ENCODE measurements at regions of chr6 and their contacts with region 1.

Region 1: GRCh38 chr6:90274451-90275030 is 22.1 kb downstream of the BACH2 start:
- DNase-seq: peak; percentile 80 to 98 (median 86)
- ATAC-seq: peak; percentile 86
- H3K4me3 ChIP-seq: peak overlapping the region in 1 of 2 experiments; percentile 10
- H3K4me3 Mint-ChIP-seq: peak overlapping the region; percentile 74
- H3K27ac ChIP-seq: peak overlapping the region; percentile 67 to 90
- H3K27ac Mint-ChIP-seq: peak overlapping the region; percentile 98
- H3K4me1 ChIP-seq: peaks cover 87% of the 10 kb centered on the region
- H3K4me1 Mint-ChIP-seq: peaks cover 90% of the 10 kb centered on the region
- H3K27me3 ChIP-seq: no peaks in the 10 kb centered on the region
- H3K27me3 Mint-ChIP-seq: no peaks in the 10 kb centered on the region
- CTCF ChIP-seq: peak; percentile 47

Region 2: DNA sequence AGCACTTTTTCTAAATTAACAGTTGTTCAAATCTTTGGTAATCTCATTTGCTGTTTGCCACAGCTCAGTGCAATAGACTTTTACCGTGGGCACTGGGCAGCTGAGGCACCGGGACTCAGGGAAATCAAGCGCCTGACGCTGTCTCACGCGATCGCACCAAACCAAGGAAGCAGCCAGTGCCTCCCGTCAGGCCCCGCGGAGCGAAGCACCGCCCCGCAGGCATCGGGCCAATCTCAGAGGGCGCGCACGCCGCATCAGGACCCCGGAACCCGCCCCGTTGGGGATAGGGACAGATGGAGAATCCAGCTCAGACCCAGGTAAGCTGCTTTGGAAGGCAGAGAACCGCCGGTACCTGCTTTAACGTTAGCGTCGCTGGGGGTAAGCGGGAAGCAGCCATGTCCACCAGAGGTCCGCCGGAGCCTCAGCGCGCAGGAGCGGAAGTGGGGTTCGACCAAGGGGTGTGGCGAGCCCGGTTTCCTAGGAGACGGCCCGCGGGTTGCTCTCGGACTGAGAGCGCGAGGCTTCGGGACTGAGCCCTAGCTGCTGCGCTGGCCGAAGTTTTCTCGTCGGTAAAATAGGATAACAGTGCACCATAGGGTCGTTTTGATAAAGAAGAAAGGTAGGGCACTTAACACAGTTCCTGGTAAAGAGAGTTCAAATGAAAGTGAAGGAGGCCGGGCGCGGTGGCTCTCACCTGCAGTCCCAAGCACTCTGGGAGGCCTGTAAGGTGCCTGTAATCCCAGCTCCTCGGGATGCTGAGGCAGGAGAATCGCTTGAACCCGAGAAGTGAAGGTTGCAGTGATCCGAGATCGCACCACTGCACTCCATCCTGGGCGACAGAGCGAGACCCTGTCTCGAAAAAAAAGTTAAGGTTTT is 636.0 kb before region 1 on chr6 and contains the start of gene LYRM2:
- CTCF ChIA-PET with region 1: no interaction called
- POLR2A ChIA-PET with region 1: no interaction called
- intact Hi-C with region 1: loop called in 1 of 2 experiments (anchors 5 kb)
- DNase-seq: peak; percentile 83 to 95 (median 89)
- ATAC-seq: peak; percentile 95
- H3K4me3 ChIP-seq: peak within 1 kb of the TSS; percentile 84 to 90
- H3K4me3 Mint-ChIP-seq: peak within 1 kb of the TSS; percentile 99
- H3K27ac ChIP-seq: peak within 1 kb of the TSS; percentile 91 to 98
- H3K27ac Mint-ChIP-seq: peak within 1 kb of the TSS; percentile 99
- H3K4me1 ChIP-seq: peaks cover 15% of the 10 kb centered on the region
- H3K4me1 Mint-ChIP-seq: peaks cover 34% of the 10 kb centered on the region
- H3K27me3 ChIP-seq: no peaks in the 10 kb centered on the region
- H3K27me3 Mint-ChIP-seq: no peaks in the 10 kb centered on the region
- CTCF ChIP-seq: no peak
- total RNA-seq, gene LYRM2: 16.7 to 17.8 TPM

Region 3: GRCh38 chr6:89662742-89663404 is 611.7 kb before region 1 on chr6:
- CTCF ChIA-PET with region 1: no interaction called
- POLR2A ChIA-PET with region 1: no interaction called
- intact Hi-C with region 1: no loop called
- DNase-seq: no peak
- ATAC-seq: no peak
- H3K4me3 ChIP-seq: no peak overlapping the region
- H3K4me3 Mint-ChIP-seq: no peak overlapping the region
- H3K27ac ChIP-seq: no peak overlapping the region
- H3K27ac Mint-ChIP-seq: peak overlapping the region; percentile 37
- H3K4me1 ChIP-seq: no peaks in the 10 kb centered on the region
- H3K4me1 Mint-ChIP-seq: no peaks in the 10 kb centered on the region
- H3K27me3 ChIP-seq: no peaks in the 10 kb centered on the region
- H3K27me3 Mint-ChIP-seq: no peaks in the 10 kb centered on the region
- CTCF ChIP-seq: no peak

Region 4: GRCh38 chr6:90080876-90081481 is 193.6 kb before region 1 on chr6:
- CTCF ChIA-PET with region 1: interaction called, 5 read pairs
- POLR2A ChIA-PET with region 1: no interaction called
- intact Hi-C with region 1: loop called (anchors 5 kb)
- DNase-seq: peak; percentile 40 to 89 (median 68)
- ATAC-seq: peak; percentile 80
- H3K4me3 ChIP-seq: peak overlapping the region; percentile 54 to 66
- H3K4me3 Mint-ChIP-seq: peak overlapping the region; percentile 98
- H3K27ac ChIP-seq: peak overlapping the region; percentile 66 to 77
- H3K27ac Mint-ChIP-seq: peak overlapping the region; percentile 99
- H3K4me1 ChIP-seq: peaks cover 75% of the 10 kb centered on the region
- H3K4me1 Mint-ChIP-seq: peaks cover 89% of the 10 kb centered on the region
- H3K27me3 ChIP-seq: no peaks in the 10 kb centered on the region
- H3K27me3 Mint-ChIP-seq: no peaks in the 10 kb centered on the region
- CTCF ChIP-seq: no peak

Region 5: GRCh38 chr6:90216072-90216977 is 58.2 kb before region 1 on chr6:
- CTCF ChIA-PET with region 1: interaction called, 4 read pairs
- POLR2A ChIA-PET with region 1: interaction called, 3 read pairs
- intact Hi-C with region 1: loop called (anchors 1 to 2 kb)
- DNase-seq: peak in 7 of 9 experiments; percentile 21 to 84 (median 62)
- ATAC-seq: peak; percentile 29
- H3K4me3 ChIP-seq: peak overlapping the region in 1 of 2 experiments; percentile 16
- H3K4me3 Mint-ChIP-seq: peak overlapping the region; percentile 21
- H3K27ac ChIP-seq: peak overlapping the region; percentile 39 to 71
- H3K27ac Mint-ChIP-seq: no peak overlapping the region
- H3K4me1 ChIP-seq: peaks cover 100% of the 10 kb centered on the region
- H3K4me1 Mint-ChIP-seq: peaks cover 31% of the 10 kb centered on the region
- H3K27me3 ChIP-seq: no peaks in the 10 kb centered on the region
- H3K27me3 Mint-ChIP-seq: no peaks in the 10 kb centered on the region
- CTCF ChIP-seq: no peak

Region 6: GRCh38 chr6:90256698-90257485 is 17.6 kb before region 1 on chr6:
- CTCF ChIA-PET with region 1: interaction called, 4 read pairs
- POLR2A ChIA-PET with region 1: interaction called, 3 read pairs
- intact Hi-C with region 1: loop called in 1 of 2 experiments (anchors 2 kb)
- DNase-seq: peak in 3 of 9 experiments; percentile 30 to 63 (median 45)
- ATAC-seq: peak; percentile 77
- H3K4me3 ChIP-seq: no peak overlapping the region
- H3K4me3 Mint-ChIP-seq: peak overlapping the region; percentile 1
- H3K27ac ChIP-seq: peak overlapping the region in 1 of 2 experiments; percentile 29
- H3K27ac Mint-ChIP-seq: peak overlapping the region; percentile 82
- H3K4me1 ChIP-seq: peaks cover 63% of the 10 kb centered on the region
- H3K4me1 Mint-ChIP-seq: peaks cover 84% of the 10 kb centered on the region
- H3K27me3 ChIP-seq: no peaks in the 10 kb centered on the region
- H3K27me3 Mint-ChIP-seq: no peaks in the 10 kb centered on the region
- CTCF ChIP-seq: no peak

Region 7: GRCh38 chr6:90319044-90319443 is 44.5 kb after region 1 on chr6:
- CTCF ChIA-PET with region 1: no interaction called
- POLR2A ChIA-PET with region 1: no interaction called
- intact Hi-C with region 1: no loop called
- DNase-seq: no peak
- ATAC-seq: peak; percentile 52
- H3K4me3 ChIP-seq: no peak overlapping the region
- H3K4me3 Mint-ChIP-seq: no peak overlapping the region
- H3K27ac ChIP-seq: no peak overlapping the region
- H3K27ac Mint-ChIP-seq: no peak overlapping the region
- H3K4me1 ChIP-seq: no peaks in the 10 kb centered on the region
- H3K4me1 Mint-ChIP-seq: peaks cover 4% of the 10 kb centered on the region
- H3K27me3 ChIP-seq: no peaks in the 10 kb centered on the region
- H3K27me3 Mint-ChIP-seq: no peaks in the 10 kb centered on the region
- CTCF ChIP-seq: no peak

Measured in CD8-positive, alpha-beta T cell (primary cell).